ENCODE measurements at regions of chr19 and their contacts with region 1.

Region 1: DNA sequence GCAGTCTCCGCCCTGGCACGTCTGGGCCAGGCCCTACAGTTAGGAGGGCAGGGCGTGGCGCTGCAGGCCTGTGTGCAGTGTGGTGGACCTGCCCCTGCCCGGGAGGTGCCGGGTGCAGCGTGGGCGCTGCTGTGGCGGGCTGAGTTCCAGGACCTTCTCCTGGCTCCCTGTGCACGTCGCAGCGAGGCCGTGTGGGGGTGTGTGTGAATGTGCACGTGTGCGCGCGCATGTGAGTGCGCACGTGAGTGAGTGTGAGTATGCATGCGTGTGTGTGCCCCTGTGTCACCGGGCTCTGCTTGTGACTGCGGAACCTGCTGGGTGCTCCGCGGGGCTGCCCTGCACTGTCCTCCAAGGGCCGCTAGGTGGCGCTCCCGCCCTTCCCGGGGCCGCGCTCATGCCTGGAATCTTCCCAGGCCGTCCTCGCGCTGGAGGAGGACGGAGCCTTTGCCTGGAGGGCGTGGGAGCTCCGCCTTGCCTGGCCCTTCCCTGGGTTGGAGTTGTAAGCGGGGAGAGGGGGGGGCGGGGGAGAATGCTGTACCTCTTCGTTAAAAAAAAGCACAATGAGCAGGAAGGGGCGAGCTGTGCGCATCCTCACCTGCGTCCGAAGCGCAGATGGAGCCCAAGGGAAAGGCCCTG is 79.3 kb downstream of the KDM4B start:
- DNase-seq: no peak
- H3K4me3 ChIP-seq: peak overlapping the region in 1 of 4 donors; percentile 32
- H3K27ac ChIP-seq: peak overlapping the region; percentile 65 to 86 (median 73)
- H3K4me1 ChIP-seq: peaks cover 36 to 55% (median 44%) of the 10 kb centered on the region in 3 donors
- H3K27me3 ChIP-seq: no peaks in the 10 kb centered on the region
- CTCF ChIP-seq: peak; percentile 94 to 100 (median 98)
- POLR2A ChIP-seq: no peak

Region 2: GRCh38 chr19:5585461-5586299 is 537.5 kb after region 1 on chr19:
- intact Hi-C with region 1: loop called (anchors 10 kb)
- DNase-seq: no peak
- H3K4me3 ChIP-seq: peak overlapping the region in 1 of 4 donors; percentile 4
- H3K27ac ChIP-seq: peak overlapping the region; percentile 47 to 83 (median 66)
- H3K4me1 ChIP-seq: peaks cover 17 to 55% (median 21%) of the 10 kb centered on the region in 3 donors
- H3K27me3 ChIP-seq: no peaks in the 10 kb centered on the region
- CTCF ChIP-seq: peak in 1 of 6 experiments; percentile 8
- POLR2A ChIP-seq: no peak

Measured in esophagus squamous epithelium (tissue), 5 donors.